Activated CD4-positive, alpha-beta T cell treated with anti-CD3 and anti-CD28 coated beads, Interleukin-2, amount 10 ng/mL, durations not matched to agents 24 days and 14 days (primary cell): ENCODE measurements at regions of chr1 and their contacts with region 1.

Region 1: GRCh38 chr1:212284744-212285684 is at the start of gene PPP2R5A:
- DNase-seq: peak; percentile 100
- H3K4me3 Mint-ChIP-seq: peak within 1 kb of the TSS; percentile 97
- H3K27ac Mint-ChIP-seq: peak within 1 kb of the TSS; percentile 99
- H3K4me1 Mint-ChIP-seq: peaks cover 30% of the 10 kb centered on the region
- H3K27me3 Mint-ChIP-seq: peaks cover 2% of the 10 kb centered on the region
- total RNA-seq, gene PPP2R5A: 43.6 and 44.4 TPM in 2 replicates

Region 2: GRCh38 chr1:211675230-211676105 is 609.5 kb before region 1 on chr1 and contains the start of gene NEK2:
- intact Hi-C with region 1: loop called (anchors 1 kb)
- DNase-seq: peak; percentile 97
- H3K4me3 Mint-ChIP-seq: peak within 1 kb of the TSS; percentile 97
- H3K27ac Mint-ChIP-seq: peak within 1 kb of the TSS; percentile 85
- H3K4me1 Mint-ChIP-seq: peaks cover 28% of the 10 kb centered on the region
- H3K27me3 Mint-ChIP-seq: peaks cover 7% of the 10 kb centered on the region
- total RNA-seq, gene NEK2: 18.0 and 18.2 TPM in 2 replicates

Region 3: DNA sequence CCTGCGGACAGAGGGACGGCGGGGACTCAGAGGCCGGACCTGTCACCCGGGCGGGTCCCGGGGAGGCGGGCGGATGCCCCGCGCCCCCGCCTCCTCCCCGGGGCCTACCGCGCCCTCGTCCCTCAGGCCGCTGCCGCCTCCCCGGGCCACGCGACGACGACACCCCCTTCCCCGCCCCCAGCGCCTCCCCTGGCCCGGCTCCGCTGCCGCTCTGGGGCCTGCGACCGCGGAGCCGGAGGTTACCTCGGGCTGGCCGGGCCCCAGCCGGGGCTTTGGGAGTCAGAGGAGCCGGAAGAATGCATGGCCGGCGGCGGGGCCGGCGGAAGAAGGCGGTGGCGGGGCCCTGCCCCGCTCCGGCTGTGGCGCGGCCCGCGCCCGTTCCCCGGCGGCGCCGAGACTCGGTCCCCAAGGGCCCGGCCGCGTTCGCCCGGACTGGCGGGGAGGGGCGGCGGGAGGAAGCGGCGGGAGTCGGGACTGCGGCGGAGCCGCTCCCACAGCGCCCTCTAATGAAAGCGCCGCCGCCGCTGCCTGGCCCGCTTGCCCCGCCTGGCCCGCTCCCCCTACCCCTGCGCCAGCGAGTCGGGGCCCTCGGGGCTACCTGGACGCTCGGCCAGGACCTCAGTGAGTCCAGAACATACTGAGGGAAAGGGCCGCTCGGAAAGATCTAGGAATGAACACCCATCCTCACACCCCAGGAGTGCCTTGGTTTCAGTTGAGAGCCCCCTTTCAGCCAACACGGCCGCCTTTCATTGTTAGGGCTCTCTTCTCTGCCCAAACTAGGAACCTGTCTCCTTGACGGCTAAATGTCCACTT is 454.5 kb before region 1 on chr1 and contains the start of gene LPGAT1:
- intact Hi-C with region 1: loop called (anchors 10 kb)
- DNase-seq: peak; percentile 91
- H3K4me3 Mint-ChIP-seq: peak within 1 kb of the TSS; percentile 91
- H3K27ac Mint-ChIP-seq: peak within 1 kb of the TSS; percentile 88
- H3K4me1 Mint-ChIP-seq: peaks cover 62% of the 10 kb centered on the region
- H3K27me3 Mint-ChIP-seq: no peaks in the 10 kb centered on the region
- total RNA-seq, gene LPGAT1: 35.6 and 42.1 TPM in 2 replicates

Region 4: GRCh38 chr1:212035123-212035834 is 249.7 kb before region 1 on chr1 and contains the starts of genes DTL and INTS7:
- intact Hi-C with region 1: loop called (anchors 1 kb)
- DNase-seq: peak; percentile 100
- H3K4me3 Mint-ChIP-seq: peak within 1 kb of the TSS; percentile 98
- H3K27ac Mint-ChIP-seq: peak within 1 kb of the TSS; percentile 99
- H3K4me1 Mint-ChIP-seq: peaks cover 60% of the 10 kb centered on the region
- H3K27me3 Mint-ChIP-seq: peaks cover 3% of the 10 kb centered on the region
- total RNA-seq, gene DTL: 90.4 and 99.5 TPM in 2 replicates
- total RNA-seq, gene INTS7: 34.4 and 36.8 TPM in 2 replicates

Region 5: DNA sequence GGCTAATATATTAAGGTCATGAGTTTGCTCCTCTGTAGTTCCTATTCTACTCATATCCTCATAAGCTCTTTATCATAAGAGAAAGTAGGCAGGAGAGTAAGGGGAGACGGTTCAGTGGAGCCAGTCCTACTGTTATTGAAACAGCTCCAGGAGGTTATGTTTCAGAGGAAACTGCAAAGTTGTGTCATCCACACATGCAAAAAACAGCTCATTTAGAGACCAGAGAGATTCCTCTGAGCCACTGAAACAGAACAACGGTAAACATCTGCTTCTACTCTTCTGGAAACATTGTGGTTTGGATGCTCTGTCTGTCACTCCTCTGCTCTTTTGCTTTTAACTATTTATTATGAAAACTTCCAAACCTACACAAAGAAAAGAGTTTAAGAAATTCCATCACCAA is 66.1 kb before region 1 on chr1:
- intact Hi-C with region 1: loop called (anchors 2 kb)
- DNase-seq: peak; percentile 70
- H3K4me3 Mint-ChIP-seq: peak overlapping the region; percentile 34
- H3K27ac Mint-ChIP-seq: peak overlapping the region; percentile 81
- H3K4me1 Mint-ChIP-seq: peaks cover 27% of the 10 kb centered on the region
- H3K27me3 Mint-ChIP-seq: no peaks in the 10 kb centered on the region

Region 6: DNA sequence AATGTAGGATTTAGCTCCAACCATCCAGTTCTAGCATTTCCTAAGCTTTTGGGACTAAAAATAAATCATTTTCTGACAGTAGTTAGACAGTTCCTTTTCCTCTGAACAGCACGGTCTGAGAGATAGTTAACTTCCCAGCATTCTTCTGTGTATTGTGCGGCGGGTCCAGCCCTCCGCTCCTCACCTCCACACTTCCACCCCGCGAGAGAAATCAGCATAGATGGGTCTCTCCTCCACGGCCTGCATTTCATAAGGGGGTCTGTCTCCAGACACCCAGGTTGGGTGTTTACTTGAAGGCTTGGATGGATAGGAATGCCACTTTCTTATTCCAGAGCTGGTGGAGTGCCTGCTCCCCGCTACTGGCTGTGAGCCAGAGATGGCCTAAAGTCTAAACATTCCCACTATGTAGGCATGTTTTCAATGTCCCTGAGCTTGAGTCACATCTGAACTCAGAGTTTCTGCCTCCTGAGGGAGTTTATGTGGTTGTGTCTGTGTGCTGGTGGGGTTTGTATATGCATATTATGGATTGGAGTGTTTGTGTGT is 37.8 kb before region 1 on chr1:
- intact Hi-C with region 1: no loop called
- DNase-seq: no peak
- H3K4me3 Mint-ChIP-seq: no peak overlapping the region
- H3K27ac Mint-ChIP-seq: no peak overlapping the region
- H3K4me1 Mint-ChIP-seq: peaks cover 29% of the 10 kb centered on the region
- H3K27me3 Mint-ChIP-seq: peaks cover 4% of the 10 kb centered on the region

Region 7: DNA sequence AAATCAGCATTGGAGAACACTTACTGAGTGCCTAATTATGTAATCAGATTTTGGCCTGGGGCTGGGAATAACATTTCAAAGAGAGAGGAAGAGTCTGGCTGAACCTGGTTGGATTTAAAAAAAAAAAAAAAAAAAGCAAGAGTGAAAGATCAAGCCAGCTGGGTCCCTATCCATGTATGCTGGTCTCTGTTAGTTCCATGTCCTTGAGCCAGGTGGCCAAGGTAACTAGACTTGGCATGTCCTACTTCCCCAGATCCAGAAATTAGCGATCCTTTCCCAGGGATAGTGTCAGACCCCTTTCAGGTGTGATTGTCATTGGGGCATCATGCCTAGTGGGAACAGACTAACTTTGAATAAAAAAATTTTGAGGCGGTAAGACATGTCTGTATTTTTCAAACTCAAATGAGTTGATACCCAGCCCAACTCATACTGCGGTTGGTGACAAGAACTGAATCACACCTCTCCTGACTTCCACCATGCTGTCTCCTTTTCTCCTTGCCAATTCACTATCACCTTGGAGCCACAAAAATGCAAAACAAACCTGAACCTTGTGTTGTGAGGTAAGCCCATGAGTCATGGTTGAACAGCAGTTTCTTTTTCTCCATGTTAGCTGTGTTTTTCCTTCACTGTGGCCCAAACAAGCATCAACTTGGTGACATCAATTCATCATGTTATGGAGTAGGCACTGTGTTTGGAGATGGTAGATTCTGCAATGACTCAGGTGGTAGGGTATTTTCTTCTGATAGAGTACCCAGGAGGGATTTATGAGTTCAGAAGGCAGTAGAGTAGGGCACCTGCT is 24.3 kb before region 1 on chr1:
- intact Hi-C with region 1: loop called (anchors 2 kb)
- DNase-seq: peak; percentile 75
- H3K4me3 Mint-ChIP-seq: no peak overlapping the region
- H3K27ac Mint-ChIP-seq: peak overlapping the region; percentile 73
- H3K4me1 Mint-ChIP-seq: peaks cover 34% of the 10 kb centered on the region
- H3K27me3 Mint-ChIP-seq: no peaks in the 10 kb centered on the region

Region 8: DNA sequence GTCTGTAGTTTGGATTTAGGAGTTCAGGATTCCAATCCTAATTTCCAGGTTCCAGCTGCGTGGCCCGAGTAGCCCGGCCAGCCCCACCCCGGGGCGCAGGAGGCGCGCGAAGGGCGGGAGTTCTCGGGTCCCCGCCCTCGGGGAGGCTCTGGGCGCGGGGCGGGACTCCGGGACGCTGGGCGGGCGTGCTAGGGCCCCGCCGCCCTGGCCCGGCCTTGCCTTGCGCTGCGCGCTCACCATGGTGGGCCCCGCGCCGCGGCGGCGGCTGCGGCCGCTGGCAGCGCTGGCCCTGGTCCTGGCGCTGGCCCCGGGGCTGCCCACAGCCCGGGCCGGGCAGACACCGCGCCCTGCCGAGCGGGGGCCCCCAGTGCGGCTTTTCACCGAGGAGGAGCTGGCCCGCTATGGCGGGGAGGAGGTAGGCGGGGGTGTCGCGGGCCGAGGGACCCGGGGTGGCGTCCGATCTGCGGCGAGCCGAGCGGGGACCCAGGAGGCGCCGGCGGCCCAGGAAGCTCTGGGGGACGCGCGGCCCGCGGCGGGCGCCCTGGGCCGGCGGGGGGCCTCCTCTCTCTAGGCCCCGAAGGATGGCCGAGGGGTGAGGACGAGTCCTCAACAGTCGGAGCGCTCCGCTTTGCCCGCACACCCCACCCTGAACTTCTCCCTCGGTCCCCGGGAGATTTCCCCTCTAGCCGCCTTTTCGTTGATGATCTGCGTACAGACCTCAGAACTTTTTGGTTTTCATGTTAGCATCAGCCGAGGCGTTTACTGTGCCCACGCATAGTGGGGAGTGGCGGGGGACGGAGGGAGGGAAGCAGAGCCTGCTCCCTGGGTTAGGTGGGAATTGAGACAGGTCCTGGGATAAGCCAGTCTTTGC is 147.9 kb after region 1 on chr1 and contains the start of gene NENF:
- intact Hi-C with region 1: loop called (anchors 2 kb)
- DNase-seq: peak; percentile 95
- H3K4me3 Mint-ChIP-seq: peak within 1 kb of the TSS; percentile 82
- H3K27ac Mint-ChIP-seq: peak within 1 kb of the TSS; percentile 76
- H3K4me1 Mint-ChIP-seq: peaks cover 32% of the 10 kb centered on the region
- H3K27me3 Mint-ChIP-seq: peaks cover 2% of the 10 kb centered on the region
- total RNA-seq, gene NENF: 35.1 and 36.1 TPM in 2 replicates

Region 9: GRCh38 chr1:212477014-212477679 is 192.1 kb after region 1 on chr1:
- intact Hi-C with region 1: no loop called
- DNase-seq: peak; percentile 93
- H3K4me3 Mint-ChIP-seq: no peak overlapping the region
- H3K27ac Mint-ChIP-seq: peak overlapping the region; percentile 2
- H3K4me1 Mint-ChIP-seq: peaks cover 13% of the 10 kb centered on the region
- H3K27me3 Mint-ChIP-seq: peaks cover 26% of the 10 kb centered on the region